ENCODE measurements at regions of chr4 and their contacts with region 1.

Region 1: GRCh38 chr4:17347445-17347844 is 164.4 kb downstream of the QDPR start:
- DNase-seq: no peak
- ATAC-seq: peak; percentile 40 to 44

Region 2: DNA sequence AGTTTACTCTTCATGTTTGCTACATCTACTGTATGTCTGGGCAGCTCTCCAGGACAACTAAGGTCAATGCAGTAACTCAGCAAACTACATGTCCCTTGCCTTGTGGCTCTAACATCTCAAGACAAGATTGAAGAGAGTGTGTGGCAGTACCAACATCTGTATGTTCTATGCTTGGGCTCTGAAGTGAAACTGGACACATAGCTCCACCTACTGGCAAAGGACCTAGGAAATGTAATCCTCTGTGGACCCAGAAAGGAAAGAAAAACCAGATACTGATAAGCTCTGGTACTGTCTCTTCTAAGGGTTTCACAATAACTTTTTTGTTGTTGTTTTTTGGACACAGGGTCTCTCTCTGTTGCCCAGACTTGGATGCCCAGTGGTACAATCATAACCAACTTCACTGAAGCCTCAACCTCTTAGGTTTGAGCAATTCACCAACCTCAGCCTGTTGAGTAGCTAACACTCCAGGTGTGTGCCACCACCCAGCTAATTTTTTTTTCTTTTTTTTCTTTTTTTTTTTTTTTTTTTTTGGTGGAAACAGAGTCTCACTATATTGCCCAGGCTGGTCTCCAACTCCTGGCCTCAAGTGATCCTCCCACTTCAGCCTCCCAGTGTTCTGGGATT is 100.3 kb after region 1 on chr4:
- intact Hi-C with region 1: loop called in 1 of 2 experiments (anchors 5 kb)
- DNase-seq: no peak
- ATAC-seq: peak; percentile 89 to 95

Measured in left cardiac atrium (tissue), 4 donors.